Ascending aorta (tissue), 2 donors: ENCODE measurements at regions of chr12 and their contacts with region 1.

Region 1: GRCh38 chr12:66301944-66302826 is at the start of gene HELB:
- DNase-seq: peak; percentile 93 to 99
- H3K4me3 ChIP-seq: peak within 1 kb of the TSS; percentile 79 to 82
- H3K27ac ChIP-seq: peak within 1 kb of the TSS; percentile 67 to 71
- H3K4me1 ChIP-seq: peaks cover 0 to 4% of the 10 kb centered on the region in 2 donors
- H3K27me3 ChIP-seq: no peaks in the 10 kb centered on the region
- CTCF ChIP-seq: no peak
- total RNA-seq, gene HELB: 3.1 TPM

Region 2: GRCh38 chr12:65278576-65279368 is 1023.4 kb before region 1 on chr12 and contains the start of gene MSRB3:
- intact Hi-C with region 1: loop called (anchors 5 kb)
- DNase-seq: peak in 1 of 2 donors; percentile 88
- H3K4me3 ChIP-seq: peak within 1 kb of the TSS; percentile 79 to 94
- H3K27ac ChIP-seq: peak within 1 kb of the TSS; percentile 97 to 99
- H3K4me1 ChIP-seq: peaks cover 0 to 23% of the 10 kb centered on the region in 2 donors
- H3K27me3 ChIP-seq: no peaks in the 10 kb centered on the region
- CTCF ChIP-seq: peak in 1 of 3 experiments; percentile 11
- total RNA-seq, gene MSRB3: 79.4 TPM

Region 3: GRCh38 chr12:66130277-66131066 is 171.7 kb before region 1 on chr12 and contains the start of gene LLPH:
- intact Hi-C with region 1: loop called (anchors 5 kb)
- DNase-seq: peak; percentile 53 to 93
- H3K4me3 ChIP-seq: peak within 1 kb of the TSS; percentile 82 to 98
- H3K27ac ChIP-seq: peak within 1 kb of the TSS; percentile 51 to 74
- H3K4me1 ChIP-seq: peaks cover 0 to 6% of the 10 kb centered on the region in 2 donors
- H3K27me3 ChIP-seq: no peaks in the 10 kb centered on the region
- CTCF ChIP-seq: no peak
- total RNA-seq, gene LLPH: 0.21 TPM

Region 4: DNA sequence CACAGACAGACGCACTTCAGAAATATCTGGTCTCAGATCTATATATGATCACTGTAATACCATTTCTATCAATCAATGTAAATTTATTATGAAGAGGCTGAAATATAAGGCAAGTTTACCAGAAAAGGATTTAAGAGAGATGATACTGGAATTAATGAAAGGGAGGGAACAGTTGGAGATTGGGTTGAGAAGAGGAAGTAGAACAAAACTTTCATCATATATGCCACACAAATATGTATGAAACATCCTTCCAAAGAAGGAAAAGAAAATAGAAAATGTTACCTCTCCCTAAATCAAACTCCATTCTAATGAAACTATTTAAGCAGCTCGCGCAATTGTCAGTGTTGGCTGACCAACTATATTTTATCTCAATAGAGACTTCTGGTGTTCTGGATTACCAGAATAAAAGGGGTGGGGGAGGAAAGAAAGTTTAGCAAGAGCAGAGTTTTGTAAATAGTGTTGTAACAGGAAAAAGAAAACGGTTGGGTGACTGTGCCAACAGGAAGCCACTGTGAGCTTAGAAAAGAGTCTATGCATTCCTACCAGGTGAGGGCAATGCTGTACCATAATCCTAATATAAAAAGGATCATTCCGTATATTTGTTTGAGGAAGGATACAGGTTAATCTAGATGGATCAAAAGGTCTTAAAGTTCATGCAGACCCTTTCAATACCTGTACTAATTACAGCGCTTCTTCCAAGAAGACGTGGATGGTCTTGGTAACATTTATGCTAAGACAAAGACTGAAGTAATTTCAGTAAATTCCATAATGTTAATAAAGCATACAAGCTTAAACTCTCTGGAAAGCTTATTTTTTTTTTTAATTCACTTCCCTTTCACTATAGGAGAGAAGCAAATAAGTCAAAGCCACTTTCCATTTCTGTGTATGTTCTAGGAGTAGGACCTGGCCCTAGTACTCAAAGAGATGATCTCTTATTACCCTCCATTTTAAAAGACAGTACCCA is 157.1 kb before region 1 on chr12:
- intact Hi-C with region 1: no loop called
- DNase-seq: no peak
- H3K4me3 ChIP-seq: no peak overlapping the region
- H3K27ac ChIP-seq: peak overlapping the region; percentile 7 to 41
- H3K4me1 ChIP-seq: no peaks in the 10 kb centered on the region
- H3K27me3 ChIP-seq: no peaks in the 10 kb centered on the region
- CTCF ChIP-seq: peak; percentile 29 to 38 (median 33)

Region 5: GRCh38 chr12:66188584-66189485 is 113.3 kb before region 1 on chr12 and contains the start of gene IRAK3:
- intact Hi-C with region 1: loop called (anchors 5 kb)
- DNase-seq: peak; percentile 65 to 95
- H3K4me3 ChIP-seq: peak within 1 kb of the TSS; percentile 72 to 79
- H3K27ac ChIP-seq: peak within 1 kb of the TSS; percentile 81 to 85
- H3K4me1 ChIP-seq: peaks cover 0 to 5% of the 10 kb centered on the region in 2 donors
- H3K27me3 ChIP-seq: no peaks in the 10 kb centered on the region
- CTCF ChIP-seq: no peak
- total RNA-seq, gene IRAK3: 35.9 TPM

Region 6: GRCh38 chr12:66653801-66654200 is 351.6 kb after region 1 on chr12:
- intact Hi-C with region 1: no loop called
- DNase-seq: no peak
- H3K4me3 ChIP-seq: no peak overlapping the region
- H3K27ac ChIP-seq: no peak overlapping the region
- H3K4me1 ChIP-seq: no peaks in the 10 kb centered on the region
- H3K27me3 ChIP-seq: no peaks in the 10 kb centered on the region
- CTCF ChIP-seq: no peak

Region 7: DNA sequence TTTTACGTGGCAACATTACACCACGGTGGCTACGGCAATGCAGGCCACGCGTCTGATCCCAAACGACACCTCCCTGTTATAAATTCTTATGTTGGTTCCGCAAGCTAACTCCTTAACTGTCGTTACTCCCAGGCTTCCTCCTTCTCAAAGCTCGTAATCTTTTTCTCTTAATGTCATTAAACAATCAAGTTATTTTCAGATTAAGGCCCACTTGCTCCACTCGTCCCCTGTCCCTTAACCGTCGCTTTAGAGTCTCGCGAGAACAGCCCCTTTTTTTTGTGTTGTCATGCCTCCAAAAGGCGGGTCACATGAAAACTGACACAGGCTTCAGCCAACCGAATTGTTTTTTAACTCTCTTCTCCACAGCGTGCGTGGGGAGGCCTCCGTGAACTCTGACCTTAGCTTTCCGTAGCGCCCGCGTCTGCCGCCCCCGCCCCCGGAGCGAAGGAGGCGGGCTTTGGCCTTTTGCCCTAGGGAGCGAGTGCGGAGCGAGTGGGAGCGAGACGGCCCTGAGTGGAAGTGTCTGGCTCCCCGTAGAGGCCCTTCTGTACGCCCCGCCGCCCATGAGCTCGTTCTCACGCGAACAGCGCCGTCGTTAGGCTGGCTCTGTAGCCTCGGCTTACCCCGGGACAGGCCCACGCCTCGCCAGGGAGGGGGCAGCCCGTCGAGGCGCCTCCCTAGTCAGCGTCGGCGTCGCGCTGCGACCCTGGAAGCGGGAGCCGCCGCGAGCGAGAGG is 966.9 kb after region 1 on chr12 and contains the start of gene CAND1:
- intact Hi-C with region 1: loop called (anchors 10 kb)
- DNase-seq: peak; percentile 90 to 99
- H3K4me3 ChIP-seq: peak within 1 kb of the TSS; percentile 78 to 96
- H3K27ac ChIP-seq: peak within 1 kb of the TSS; percentile 93 to 99
- H3K4me1 ChIP-seq: peaks cover 0 to 30% of the 10 kb centered on the region in 2 donors
- H3K27me3 ChIP-seq: no peaks in the 10 kb centered on the region
- CTCF ChIP-seq: no peak
- total RNA-seq, gene CAND1: 31.6 TPM